Thyroid gland (tissue), 4 donors: ENCODE measurements at regions of chr10 and their contacts with region 1.

Region 1: GRCh38 chr10:92880233-92880861 is 32.0 kb downstream of the EXOC6 start:
- DNase-seq: no peak
- H3K4me3 ChIP-seq: no peak overlapping the region
- H3K27ac ChIP-seq: no peak overlapping the region
- H3K4me1 ChIP-seq: peaks cover 11 to 13% of the 10 kb centered on the region in 2 donors
- H3K27me3 ChIP-seq: no peaks in the 10 kb centered on the region
- CTCF ChIP-seq: peak; percentile 19 to 69 (median 46)
- POLR2A ChIP-seq: no peak

Region 2: DNA sequence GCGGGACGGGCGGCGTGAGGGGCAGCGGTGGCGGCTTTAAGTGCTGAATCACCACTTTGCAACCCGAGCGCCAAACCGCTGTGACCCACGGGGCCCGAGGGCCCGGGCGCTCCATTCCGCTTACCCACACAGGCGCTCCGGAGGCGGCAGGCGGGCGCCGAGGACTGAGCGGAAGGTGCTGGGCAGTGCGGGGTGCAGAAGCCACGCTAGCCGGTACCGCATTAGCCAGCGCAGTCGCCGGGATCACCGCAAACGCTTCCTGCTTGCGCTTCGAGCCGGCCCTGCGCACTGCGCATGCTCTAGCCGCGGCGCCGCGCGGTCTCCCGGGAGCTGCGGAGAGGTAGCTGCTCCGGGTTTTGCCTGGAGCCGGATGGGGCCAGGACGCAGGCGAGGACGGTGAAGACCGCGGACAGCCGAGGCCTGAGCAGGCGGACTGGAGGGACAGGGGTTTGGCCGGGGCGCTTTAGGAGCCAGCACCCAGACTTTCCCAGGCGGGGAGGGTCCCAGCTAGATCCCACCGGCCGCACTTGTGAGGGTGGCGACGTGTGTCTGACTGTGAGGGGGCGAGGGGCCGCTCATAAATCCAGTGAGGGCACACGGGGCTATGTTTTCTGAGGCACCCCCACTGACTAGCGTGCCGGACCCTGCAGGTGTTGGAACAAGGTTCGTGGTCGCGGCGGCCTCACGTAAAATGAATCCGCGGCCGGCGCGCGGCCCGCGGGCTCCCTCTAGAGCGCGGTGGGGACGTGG is 306.4 kb before region 1 on chr10 and contains the start of gene IDE:
- intact Hi-C with region 1: loop called (anchors 10 kb)
- DNase-seq: peak; percentile 90
- H3K4me3 ChIP-seq: peak within 1 kb of the TSS; percentile 60 to 76 (median 70)
- H3K27ac ChIP-seq: peak within 1 kb of the TSS; percentile 32 to 97 (median 95)
- H3K4me1 ChIP-seq: peaks cover 21 to 22% of the 10 kb centered on the region in 2 donors
- H3K27me3 ChIP-seq: no peaks in the 10 kb centered on the region
- CTCF ChIP-seq: peak in 5 of 6 experiments; percentile 51 to 90 (median 77)
- POLR2A ChIP-seq: peak; percentile 6 to 80
- total RNA-seq, gene IDE: 38.8 to 95.2 (median 46.7) TPM

Region 3: DNA sequence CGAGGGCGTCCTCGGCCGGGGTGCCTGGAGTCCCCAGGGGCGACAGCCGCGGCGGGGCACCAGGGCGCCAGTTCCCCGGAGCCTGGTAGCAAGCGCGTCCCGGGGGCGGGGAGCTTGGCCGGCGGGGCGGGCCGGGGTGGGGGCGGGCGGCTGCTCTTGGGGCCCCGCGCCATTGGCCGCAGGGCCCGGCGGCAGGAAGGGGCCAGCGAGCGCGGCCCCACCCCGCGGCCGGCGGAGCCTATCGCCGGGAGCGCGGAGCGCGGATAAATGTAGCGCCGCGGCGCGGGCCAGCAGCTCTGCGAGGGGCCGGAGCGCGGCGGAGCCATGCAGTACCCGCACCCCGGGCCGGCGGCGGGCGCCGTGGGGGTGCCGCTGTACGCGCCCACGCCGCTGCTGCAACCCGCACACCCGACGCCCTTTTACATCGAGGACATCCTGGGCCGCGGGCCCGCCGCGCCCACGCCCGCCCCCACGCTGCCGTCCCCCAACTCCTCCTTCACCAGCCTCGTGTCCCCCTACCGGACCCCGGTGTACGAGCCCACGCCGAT is 190.6 kb before region 1 on chr10 and contains the start of gene HHEX:
- intact Hi-C with region 1: loop called (anchors 10 kb)
- DNase-seq: peak; percentile 88 to 89
- H3K4me3 ChIP-seq: peak within 1 kb of the TSS; percentile 94 to 99 (median 94)
- H3K27ac ChIP-seq: peak within 1 kb of the TSS; percentile 99 to 100 (median 99)
- H3K4me1 ChIP-seq: peaks cover 0 to 12% of the 10 kb centered on the region in 2 donors
- H3K27me3 ChIP-seq: no peaks in the 10 kb centered on the region
- CTCF ChIP-seq: peak in 1 of 6 experiments; percentile 25
- POLR2A ChIP-seq: peak; percentile 86 to 99
- total RNA-seq, gene HHEX: 90.9 to 154 (median 122) TPM

Region 4: GRCh38 chr10:92839191-92840085 is 40.9 kb before region 1 on chr10:
- intact Hi-C with region 1: loop called (anchors 5 kb)
- DNase-seq: peak; percentile 29 to 52
- H3K4me3 ChIP-seq: no peak overlapping the region
- H3K27ac ChIP-seq: peak overlapping the region in 1 of 3 donors; percentile 30
- H3K4me1 ChIP-seq: peaks cover 5 to 6% of the 10 kb centered on the region in 2 donors
- H3K27me3 ChIP-seq: no peaks in the 10 kb centered on the region
- CTCF ChIP-seq: no peak
- POLR2A ChIP-seq: no peak

Region 5: DNA sequence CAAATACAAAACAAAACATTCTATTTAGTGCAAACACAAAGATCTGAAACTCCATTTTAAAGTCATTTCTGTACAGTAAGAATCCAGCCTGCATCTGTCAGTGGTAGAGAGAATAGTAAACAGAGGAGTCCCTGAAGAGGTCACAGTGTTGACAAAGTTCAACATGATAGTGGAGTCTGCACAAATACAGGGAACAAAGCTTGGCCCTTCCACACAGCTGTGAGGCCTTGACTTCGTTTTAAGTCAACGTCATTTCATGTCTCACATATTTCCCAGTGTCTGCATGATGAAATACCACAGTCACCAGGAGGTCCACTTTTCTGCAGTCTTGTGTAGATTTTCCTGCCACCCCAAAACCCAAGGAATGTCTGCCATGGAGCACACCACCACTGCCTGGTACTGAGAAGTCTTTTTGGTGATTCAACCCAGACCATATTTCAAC is 226.3 kb after region 1 on chr10:
- intact Hi-C with region 1: no loop called
- DNase-seq: no peak
- H3K4me3 ChIP-seq: no peak overlapping the region
- H3K27ac ChIP-seq: no peak overlapping the region
- H3K4me1 ChIP-seq: no peaks in the 10 kb centered on the region
- H3K27me3 ChIP-seq: no peaks in the 10 kb centered on the region
- CTCF ChIP-seq: no peak
- POLR2A ChIP-seq: no peak